ENCODE measurements at regions of chr17 and their contacts with region 1.

Region 1: DNA sequence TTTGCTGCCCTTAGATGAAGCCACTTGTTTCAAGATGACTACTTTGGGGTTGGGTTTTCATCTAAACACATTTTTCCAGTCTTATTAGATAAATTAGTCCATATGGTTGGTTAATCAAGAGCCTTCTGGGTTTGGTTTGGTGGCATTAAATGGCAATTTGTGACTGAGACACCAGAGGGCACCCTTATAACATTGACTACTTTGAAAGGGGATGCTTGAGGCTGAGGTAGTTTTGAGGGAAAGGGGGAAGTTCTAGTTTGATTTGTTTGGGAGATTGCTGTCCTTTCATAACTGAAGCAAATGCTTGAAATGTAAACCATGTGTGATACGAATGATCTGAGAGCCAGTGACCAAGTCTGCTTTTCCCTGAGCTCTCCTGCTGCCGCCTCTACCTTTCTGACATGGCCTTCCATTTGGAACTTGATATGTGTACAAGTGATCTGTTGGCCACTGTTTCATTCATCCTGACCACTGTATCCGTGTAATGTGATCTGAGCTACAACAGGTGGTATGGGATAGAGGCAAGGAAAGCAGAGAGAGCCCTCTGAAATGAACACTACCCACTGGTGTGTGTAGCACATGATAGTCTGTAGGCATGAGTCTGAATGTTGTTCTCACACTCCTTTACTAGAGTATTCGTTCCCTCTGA is 5.8 kb upstream of the RARA start:
- DNase-seq: peak in 1 of 5 donors; percentile 60
- ATAC-seq: peak; percentile 33 to 71 (median 68)
- H3K4me3 ChIP-seq: no peak overlapping the region
- H3K27ac ChIP-seq: peak overlapping the region in 6 of 12 donors; percentile 4 to 64 (median 48)
- H3K4me1 ChIP-seq: peaks cover 3 to 65% (median 48%) of the 10 kb centered on the region in 12 donors
- H3K27me3 ChIP-seq: no peaks in the 10 kb centered on the region
- CTCF ChIP-seq: peak; percentile 59 to 86 (median 79)
- POLR2A ChIP-seq: no peak

Region 2: GRCh38 chr17:40355123-40355803 is 52.1 kb after region 1 on chr17:
- intact Hi-C with region 1: loop called (anchors 1 to 2 kb)
- DNase-seq: peak; percentile 72 to 91 (median 79)
- ATAC-seq: peak; percentile 48 to 70 (median 66)
- H3K4me3 ChIP-seq: no peak overlapping the region
- H3K27ac ChIP-seq: peak overlapping the region in 6 of 12 donors; percentile 39 to 60 (median 55)
- H3K4me1 ChIP-seq: peaks cover 0 to 49% (median 27%) of the 10 kb centered on the region in 12 donors
- H3K27me3 ChIP-seq: no peaks in the 10 kb centered on the region
- CTCF ChIP-seq: peak; percentile 93 to 99 (median 97)
- POLR2A ChIP-seq: no peak

Region 3: DNA sequence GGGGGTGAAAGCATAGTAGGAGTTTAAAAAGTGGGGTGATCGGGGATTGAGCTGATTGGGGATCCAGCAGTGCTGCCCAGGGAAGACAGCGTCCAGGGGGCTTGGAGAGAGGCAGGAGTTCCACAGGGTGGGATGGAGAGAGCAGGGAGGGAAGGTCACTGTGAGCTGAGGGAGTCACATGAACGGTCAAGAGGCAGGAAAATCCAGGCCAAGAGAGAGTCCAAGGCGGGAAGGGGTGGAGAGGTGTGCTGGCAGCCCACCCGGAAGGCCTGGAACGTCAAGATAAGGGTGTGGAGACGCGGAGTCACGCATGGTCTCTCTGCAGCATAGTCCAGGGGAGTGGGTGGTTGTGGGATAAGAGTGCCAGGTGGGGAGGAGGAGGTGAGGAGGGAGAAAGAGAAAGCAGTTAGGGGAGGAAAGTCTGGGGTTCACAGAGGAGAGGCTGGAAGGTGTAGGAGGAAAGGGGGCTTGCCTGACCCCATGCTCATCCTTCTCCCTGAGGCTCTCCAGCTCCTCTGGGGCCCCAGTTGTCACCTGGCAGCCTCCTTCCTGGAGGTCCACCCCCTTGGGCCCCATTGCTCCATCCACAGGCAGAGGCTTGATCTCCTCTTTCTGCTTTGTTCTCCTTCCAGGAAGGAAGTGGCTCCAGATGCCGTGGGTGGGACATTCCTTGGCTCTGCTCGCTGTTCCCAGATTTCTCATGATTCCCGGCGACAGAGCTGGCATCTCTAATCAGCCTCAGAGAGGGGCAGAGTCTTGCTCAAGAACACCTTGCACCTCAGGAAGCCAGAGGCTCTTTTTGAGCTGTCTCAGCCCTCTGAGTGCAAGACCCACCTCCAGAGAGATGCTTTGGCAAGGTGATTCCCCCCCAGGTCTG is 233.4 kb after region 1 on chr17:
- intact Hi-C with region 1: loop called in 9 of 10 experiments (anchors 5 to 10 kb)
- DNase-seq: peak in 4 of 5 donors; percentile 71 to 80 (median 76)
- ATAC-seq: peak; percentile 45 to 75 (median 64)
- H3K4me3 ChIP-seq: no peak overlapping the region
- H3K27ac ChIP-seq: peak overlapping the region; percentile 59 to 98 (median 88)
- H3K4me1 ChIP-seq: peaks cover 27 to 97% (median 71%) of the 10 kb centered on the region in 12 donors
- H3K27me3 ChIP-seq: no peaks in the 10 kb centered on the region
- CTCF ChIP-seq: no peak
- POLR2A ChIP-seq: no peak